K562 (cell line): ENCODE measurements at regions of chr12 and their contacts with region 1.

Region 1: GRCh38 chr12:101414533-101415119 is 7.1 kb upstream of the ARL1 start:
- DNase-seq: peak; percentile 31 to 78 (median 46)
- ATAC-seq: peak; percentile 83
- H3K4me3 ChIP-seq: no peak overlapping the region
- H3K27ac ChIP-seq: no peak overlapping the region
- H3K4me1 ChIP-seq: peaks cover 4 to 5% of the 10 kb centered on the region in 2 experiments; a peak in 3 of 5 replicates
- H3K27me3 ChIP-seq: no peaks in the 10 kb centered on the region
- CTCF ChIP-seq: peak; percentile 38 to 75 (median 58); a peak in 5 of 6 replicates
- EP300 ChIP-seq: no peak
- POLR2A ChIP-seq: no peak
- RAD21 ChIP-seq: peak; percentile 87 to 88

Region 2: DNA sequence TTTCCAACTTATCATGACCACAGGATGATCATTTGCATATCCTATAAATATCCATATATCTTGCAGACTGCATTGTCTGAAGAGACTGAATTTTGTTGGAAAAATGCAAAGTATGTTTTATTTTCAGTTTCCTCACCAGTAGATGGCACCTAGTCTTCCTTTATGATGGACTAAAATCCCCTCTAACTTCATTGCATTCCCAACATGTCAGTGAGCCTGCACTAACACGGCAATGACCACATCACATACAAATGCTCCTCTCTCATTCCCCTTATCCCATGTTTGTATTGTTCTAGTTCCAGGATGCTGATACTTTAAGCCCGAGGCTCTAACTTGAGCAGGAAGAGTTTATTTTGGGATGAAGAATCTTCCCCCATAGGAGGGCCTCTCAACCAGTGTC is 155.4 kb after region 1 on chr12:
- CTCF ChIA-PET with region 1: no interaction called
- POLR2A ChIA-PET with region 1: no interaction called
- in situ Hi-C with region 1: no loop called
- intact Hi-C with region 1: loop called (anchors 10 kb)
- DNase-seq: peak in 1 of 4 experiments; percentile 10
- ATAC-seq: peak; percentile 49
- H3K4me3 ChIP-seq: no peak overlapping the region
- H3K27ac ChIP-seq: no peak overlapping the region
- H3K4me1 ChIP-seq: no peaks in the 10 kb centered on the region
- H3K27me3 ChIP-seq: peaks cover 18 to 21% of the 10 kb centered on the region in 2 experiments
- CTCF ChIP-seq: peak in 2 of 3 experiments; percentile 28 to 43; a peak in 3 of 6 replicates
- EP300 ChIP-seq: no peak
- POLR2A ChIP-seq: no peak
- RAD21 ChIP-seq: peak; percentile 28 to 55; a peak in 3 of 4 replicates

Region 3: GRCh38 chr12:101619846-101620761 is 205.5 kb after region 1 on chr12:
- CTCF ChIA-PET with region 1: no interaction called
- POLR2A ChIA-PET with region 1: no interaction called
- in situ Hi-C with region 1: no loop called
- intact Hi-C with region 1: loop called (anchors 10 kb)
- DNase-seq: no peak
- ATAC-seq: no peak
- H3K4me3 ChIP-seq: no peak overlapping the region
- H3K27ac ChIP-seq: no peak overlapping the region
- H3K4me1 ChIP-seq: peaks cover 0 to 3% of the 10 kb centered on the region in 2 experiments; a peak in 1 of 5 replicates
- H3K27me3 ChIP-seq: no peaks in the 10 kb centered on the region
- CTCF ChIP-seq: no peak
- EP300 ChIP-seq: no peak
- POLR2A ChIP-seq: no peak
- RAD21 ChIP-seq: no peak

Region 4: GRCh38 chr12:101759396-101760047 is 344.9 kb after region 1 on chr12:
- CTCF ChIA-PET with region 1: interaction called, 6 read pairs
- POLR2A ChIA-PET with region 1: no interaction called
- in situ Hi-C with region 1: loop called (anchors 5 kb)
- intact Hi-C with region 1: loop called (anchors 5 kb)
- DNase-seq: peak; percentile 38 to 55 (median 50)
- ATAC-seq: peak; percentile 83
- H3K4me3 ChIP-seq: no peak overlapping the region
- H3K27ac ChIP-seq: no peak overlapping the region
- H3K4me1 ChIP-seq: no peaks in the 10 kb centered on the region
- H3K27me3 ChIP-seq: no peaks in the 10 kb centered on the region
- CTCF ChIP-seq: peak; percentile 68 to 85 (median 68)
- EP300 ChIP-seq: no peak
- POLR2A ChIP-seq: no peak
- RAD21 ChIP-seq: peak; percentile 54 to 80

Region 5: DNA sequence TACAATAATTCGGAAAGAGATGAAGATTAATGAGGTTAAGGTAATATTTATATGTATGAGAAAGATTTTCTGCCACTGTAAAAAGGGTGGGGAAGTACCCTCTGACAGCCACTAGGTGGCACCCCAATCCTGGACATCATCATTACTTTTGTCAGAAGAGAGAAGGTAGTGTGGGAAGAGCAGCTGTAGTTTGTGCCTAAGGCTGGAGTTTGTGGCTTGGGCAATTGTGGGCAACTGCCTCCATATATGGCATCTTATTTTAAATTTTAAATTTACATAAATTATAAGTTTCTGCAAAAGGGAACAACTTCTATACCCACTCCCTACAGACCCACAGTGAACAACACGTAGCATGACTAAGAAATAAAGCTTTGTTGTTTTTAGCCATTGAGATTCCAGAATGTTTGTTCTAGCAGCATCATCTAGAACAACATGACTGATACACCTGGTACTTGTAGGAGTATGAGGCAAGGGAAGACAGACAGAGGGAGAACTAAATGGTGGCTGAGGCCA is 359.1 kb after region 1 on chr12:
- CTCF ChIA-PET with region 1: interaction called, 3 read pairs
- POLR2A ChIA-PET with region 1: no interaction called
- in situ Hi-C with region 1: no loop called
- intact Hi-C with region 1: loop called (anchors 5 kb)
- DNase-seq: peak; percentile 64 to 78 (median 70)
- ATAC-seq: peak; percentile 91
- H3K4me3 ChIP-seq: no peak overlapping the region
- H3K27ac ChIP-seq: no peak overlapping the region
- H3K4me1 ChIP-seq: no peaks in the 10 kb centered on the region
- H3K27me3 ChIP-seq: no peaks in the 10 kb centered on the region
- CTCF ChIP-seq: peak; percentile 73 to 94 (median 82)
- EP300 ChIP-seq: 0 out of 2 replicates have a peak, but pooled peaks have one; percentile 21
- POLR2A ChIP-seq: no peak
- RAD21 ChIP-seq: peak; percentile 92 to 93

Region 6: DNA sequence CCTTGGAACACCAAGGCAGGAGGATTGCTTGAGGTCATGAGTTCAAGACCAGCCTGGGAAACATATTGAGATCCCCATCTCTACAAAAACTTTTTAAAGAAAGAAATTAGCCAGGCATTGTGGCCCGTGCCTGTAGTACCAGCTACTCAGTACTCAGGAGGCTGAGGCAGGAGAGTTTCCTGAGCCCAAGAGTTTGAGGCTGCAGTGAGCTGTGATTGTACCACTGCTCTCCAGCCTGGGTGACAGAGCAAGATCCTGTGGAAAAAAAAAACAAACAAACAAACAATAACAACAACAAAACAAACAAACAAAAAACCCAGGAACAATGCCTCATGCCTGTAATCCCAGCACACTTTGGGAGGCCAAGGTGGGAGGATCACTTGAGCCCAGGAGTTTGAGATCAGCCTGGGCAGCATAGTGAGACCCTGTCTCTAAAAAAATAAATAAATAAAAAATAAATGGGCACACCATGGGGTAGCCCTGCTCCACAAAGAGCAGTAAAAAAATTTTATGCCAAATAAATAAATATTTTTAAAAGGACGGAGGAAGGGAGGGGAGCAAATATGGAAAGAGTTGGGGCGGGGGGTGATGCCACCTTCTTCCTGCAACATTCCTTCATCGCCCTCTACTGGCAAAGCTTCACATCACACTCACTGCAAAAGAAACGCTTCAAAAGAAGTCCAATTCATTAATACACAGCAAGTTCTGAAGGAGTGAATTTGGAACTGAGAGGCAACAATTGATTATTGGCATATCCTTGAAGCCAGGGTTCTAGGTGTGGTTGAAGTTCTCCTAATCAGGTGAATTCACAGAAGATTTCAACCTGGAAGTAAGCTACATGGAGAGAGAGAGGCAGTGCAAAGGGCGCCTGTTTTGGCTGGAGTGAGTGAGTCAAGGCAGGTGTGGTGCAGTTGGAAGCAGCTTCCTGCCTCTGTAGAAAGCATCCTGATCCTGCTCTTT is 425.0 kb after region 1 on chr12:
- CTCF ChIA-PET with region 1: interaction called, 12 read pairs
- POLR2A ChIA-PET with region 1: no interaction called
- in situ Hi-C with region 1: loop called (anchors 5 kb)
- intact Hi-C with region 1: loop called (anchors 2 kb)
- DNase-seq: peak; percentile 63 to 79 (median 76)
- ATAC-seq: peak; percentile 90
- H3K4me3 ChIP-seq: no peak overlapping the region
- H3K27ac ChIP-seq: no peak overlapping the region
- H3K4me1 ChIP-seq: no peaks in the 10 kb centered on the region
- H3K27me3 ChIP-seq: no peaks in the 10 kb centered on the region
- CTCF ChIP-seq: peak; percentile 73 to 86 (median 81)
- EP300 ChIP-seq: no peak
- POLR2A ChIP-seq: no peak
- RAD21 ChIP-seq: peak; percentile 82 to 83

Region 7: GRCh38 chr12:101919447-101919846 is 504.8 kb after region 1 on chr12:
- CTCF ChIA-PET with region 1: no interaction called
- POLR2A ChIA-PET with region 1: no interaction called
- in situ Hi-C with region 1: no loop called
- intact Hi-C with region 1: loop called (anchors 5 kb)
- DNase-seq: no peak
- ATAC-seq: no peak
- H3K4me3 ChIP-seq: no peak overlapping the region
- H3K27ac ChIP-seq: no peak overlapping the region
- H3K4me1 ChIP-seq: no peaks in the 10 kb centered on the region
- H3K27me3 ChIP-seq: no peaks in the 10 kb centered on the region
- CTCF ChIP-seq: no peak
- EP300 ChIP-seq: no peak
- POLR2A ChIP-seq: no peak
- RAD21 ChIP-seq: no peak